PC-9 (cell line): ENCODE measurements at regions of chr12 and their contacts with region 1.

Region 1: DNA sequence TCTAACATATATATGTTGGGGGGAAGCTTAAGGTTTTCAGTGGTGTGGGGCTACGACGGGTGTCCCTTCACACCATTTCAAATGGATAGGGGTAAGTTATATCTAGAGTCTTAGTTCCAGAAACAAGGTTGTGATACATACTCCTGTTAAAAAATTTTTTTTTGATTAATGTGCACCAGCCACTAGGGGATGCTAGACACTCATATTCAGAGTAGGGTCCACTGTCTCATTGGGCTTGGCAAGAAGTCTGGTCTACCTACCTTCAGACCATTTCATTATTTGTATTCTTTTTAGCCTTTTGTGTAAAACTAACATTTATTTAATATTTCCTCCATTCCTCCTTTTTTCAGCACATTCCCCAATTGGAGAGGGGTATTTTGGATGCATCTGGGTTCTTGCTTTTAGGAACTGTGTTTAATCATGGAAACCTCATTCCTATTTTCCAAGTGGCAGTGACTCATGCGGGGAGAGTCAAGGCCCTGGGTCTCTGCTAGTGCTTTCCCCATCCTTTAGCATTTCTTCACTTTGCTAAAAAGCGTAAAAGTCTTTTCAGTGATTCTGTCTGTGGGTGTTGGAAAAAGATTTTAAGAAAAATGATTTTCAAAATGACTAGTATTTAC is 33.4 kb downstream of the ANO4 start:
- DNase-seq: no peak
- H3K4me3 ChIP-seq: no peak overlapping the region
- H3K27ac ChIP-seq: no peak overlapping the region
- H3K4me1 ChIP-seq: no peaks in the 10 kb centered on the region
- H3K27me3 ChIP-seq: no peaks in the 10 kb centered on the region
- CTCF ChIP-seq: peak; percentile 75

Region 2: DNA sequence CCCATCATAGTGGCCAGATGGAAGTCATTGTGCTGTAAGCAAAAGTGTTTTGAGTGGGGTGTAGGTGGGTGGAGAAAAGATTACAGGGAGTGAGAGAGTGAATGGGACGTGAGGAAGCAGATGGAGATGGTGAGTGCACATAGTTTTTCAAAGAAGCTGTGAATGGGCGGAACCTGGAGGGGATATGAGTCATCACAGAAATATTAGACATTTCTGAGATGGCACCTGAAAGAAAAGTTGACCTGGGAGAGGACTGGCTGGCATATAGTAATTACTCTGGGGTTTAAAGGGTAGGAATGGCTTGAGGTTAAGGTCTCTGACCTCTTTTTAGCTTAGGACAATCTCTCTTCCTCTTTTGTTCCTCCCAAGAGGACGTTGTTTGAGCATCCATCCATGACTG is 17.1 kb after region 1 on chr12:
- CTCF ChIA-PET with region 1: no interaction called
- POLR2A ChIA-PET with region 1: no interaction called
- intact Hi-C with region 1: no loop called
- DNase-seq: no peak
- H3K4me3 ChIP-seq: no peak overlapping the region
- H3K27ac ChIP-seq: no peak overlapping the region
- H3K4me1 ChIP-seq: no peaks in the 10 kb centered on the region
- H3K27me3 ChIP-seq: no peaks in the 10 kb centered on the region
- CTCF ChIP-seq: no peak

Region 3: GRCh38 chr12:101323255-101323654 is 495.2 kb after region 1 on chr12:
- CTCF ChIA-PET with region 1: no interaction called
- POLR2A ChIA-PET with region 1: no interaction called
- intact Hi-C with region 1: loop called (anchors 2 kb)
- DNase-seq: no peak
- H3K4me3 ChIP-seq: no peak overlapping the region
- H3K27ac ChIP-seq: no peak overlapping the region
- H3K4me1 ChIP-seq: no peaks in the 10 kb centered on the region
- H3K27me3 ChIP-seq: no peaks in the 10 kb centered on the region
- CTCF ChIP-seq: no peak